MCF 10A (cell line): ENCODE measurements at regions of chr9 and their contacts with region 1.

Region 1: DNA sequence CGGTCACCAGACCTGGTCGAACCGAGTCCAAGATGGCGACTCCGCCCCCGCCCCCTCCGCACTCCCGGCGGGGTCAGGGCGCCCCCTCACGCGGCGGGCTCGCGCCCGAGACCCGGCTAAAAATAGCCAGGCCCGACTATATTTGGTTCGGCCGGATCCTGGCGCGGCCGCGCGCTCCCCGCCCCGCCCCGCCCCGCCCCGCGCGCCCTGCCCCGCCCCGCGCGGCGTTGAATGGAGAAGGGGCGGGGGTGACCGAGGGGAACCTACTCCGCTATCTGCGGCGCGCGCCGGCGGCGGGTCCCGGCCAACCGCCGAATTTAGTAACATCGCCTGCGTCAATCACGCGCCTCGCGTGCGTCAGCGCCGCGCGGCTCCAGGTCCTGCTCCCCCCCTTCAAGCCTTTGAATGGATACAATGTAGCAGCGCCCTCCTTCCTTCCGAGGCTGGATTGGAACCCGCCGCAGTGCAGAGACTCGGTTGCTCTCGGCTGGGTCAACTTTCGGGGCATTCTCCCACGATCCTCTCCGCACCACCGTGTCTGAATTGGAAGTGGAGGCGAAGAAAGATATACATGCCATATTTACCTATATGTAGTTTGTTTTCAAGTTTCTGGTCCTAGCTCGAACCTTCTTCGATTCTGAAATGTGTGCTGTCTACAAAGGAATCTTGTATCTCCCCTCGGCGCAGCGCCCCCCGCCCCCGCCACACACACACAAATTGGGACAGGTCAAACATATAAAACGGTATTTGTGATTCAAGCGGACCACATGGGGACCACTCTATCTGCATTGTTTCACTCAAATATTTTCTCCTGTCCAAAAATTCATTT is 1.6 kb upstream of the NR4A3 start:
- DNase-seq: peak; percentile 90
- H3K4me3 Mint-ChIP-seq: peak overlapping the region; percentile 93
- H3K27ac Mint-ChIP-seq: peak overlapping the region; percentile 89
- H3K4me1 Mint-ChIP-seq: peaks cover 25% of the 10 kb centered on the region
- H3K27me3 Mint-ChIP-seq: peaks cover 15% of the 10 kb centered on the region
- CTCF ChIP-seq: no peak

Region 2: GRCh38 chr9:99221621-99222415 is 598.3 kb before region 1 on chr9 and contains the starts of genes ALG2 and SEC61B:
- CTCF ChIA-PET with region 1: no interaction called
- POLR2A ChIA-PET with region 1: interaction called, 31 read pairs
- intact Hi-C with region 1: no loop called
- DNase-seq: peak; percentile 92
- H3K4me3 Mint-ChIP-seq: peak within 1 kb of the TSS; percentile 98
- H3K27ac Mint-ChIP-seq: peak within 1 kb of the TSS; percentile 100
- H3K4me1 Mint-ChIP-seq: peaks cover 50% of the 10 kb centered on the region
- H3K27me3 Mint-ChIP-seq: no peaks in the 10 kb centered on the region
- CTCF ChIP-seq: no peak
- total RNA-seq, gene ALG2: 54.6 and 54.7 TPM in 2 replicates
- total RNA-seq, gene SEC61B: 238 and 324 TPM in 2 replicates

Region 3: GRCh38 chr9:99807276-99807852 is 12.7 kb before region 1 on chr9:
- CTCF ChIA-PET with region 1: interaction called, 4 read pairs
- POLR2A ChIA-PET with region 1: interaction called, 15 read pairs
- intact Hi-C with region 1: no loop called
- DNase-seq: peak; percentile 83
- H3K4me3 Mint-ChIP-seq: no peak overlapping the region
- H3K27ac Mint-ChIP-seq: no peak overlapping the region
- H3K4me1 Mint-ChIP-seq: no peaks in the 10 kb centered on the region
- H3K27me3 Mint-ChIP-seq: no peaks in the 10 kb centered on the region
- CTCF ChIP-seq: peak; percentile 80

Region 4: DNA sequence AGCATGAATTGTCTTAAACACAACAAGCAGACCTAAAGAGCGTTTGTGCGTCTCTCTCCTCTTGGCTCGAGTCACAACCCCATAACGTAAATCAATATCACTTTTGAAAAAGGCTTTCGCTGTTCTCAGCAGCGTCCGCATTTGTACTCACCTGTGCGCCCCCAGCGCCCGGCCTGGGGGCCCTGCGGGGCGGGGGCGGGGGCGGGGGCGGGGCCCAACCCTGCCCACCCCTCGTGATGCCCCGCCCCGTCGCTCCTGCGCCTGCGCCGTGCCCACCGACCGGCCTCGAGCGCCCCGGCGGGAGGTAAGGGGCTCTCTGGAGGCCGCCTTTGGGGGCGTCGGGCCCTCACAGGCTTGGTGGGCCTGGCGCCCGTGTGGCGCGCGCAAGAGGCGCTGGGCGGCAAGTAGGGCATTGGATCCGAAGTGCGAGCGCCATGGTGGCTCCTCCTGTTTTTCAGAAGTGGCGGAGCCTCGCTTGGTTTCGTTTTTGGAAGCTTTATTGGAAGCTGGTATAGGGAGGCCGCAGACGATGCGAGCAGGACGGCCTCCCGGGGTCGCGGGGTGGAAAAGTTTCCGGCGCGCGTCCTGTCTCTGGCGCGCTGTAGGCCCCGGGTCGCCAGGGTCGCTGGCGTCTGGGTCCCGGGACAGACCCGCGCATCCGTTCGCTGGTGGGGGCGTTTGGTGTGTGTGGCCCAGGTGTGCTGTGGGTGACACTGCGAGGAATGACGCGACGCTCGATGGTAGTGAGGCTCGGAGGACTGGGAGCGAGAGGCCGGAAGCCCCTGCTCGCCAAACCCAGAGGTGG is 86.5 kb after region 1 on chr9 and contains the start of gene STX17:
- CTCF ChIA-PET with region 1: interaction called, 5 read pairs
- POLR2A ChIA-PET with region 1: interaction called, 71 read pairs
- intact Hi-C with region 1: loop called (anchors 1 kb)
- DNase-seq: peak; percentile 81
- H3K4me3 Mint-ChIP-seq: peak within 1 kb of the TSS; percentile 93
- H3K27ac Mint-ChIP-seq: peak within 1 kb of the TSS; percentile 96
- H3K4me1 Mint-ChIP-seq: peaks cover 32% of the 10 kb centered on the region
- H3K27me3 Mint-ChIP-seq: no peaks in the 10 kb centered on the region
- CTCF ChIP-seq: no peak
- total RNA-seq, gene STX17: 32.4 and 37.2 TPM in 2 replicates

Region 5: GRCh38 chr9:100011062-100011681 is 191.1 kb after region 1 on chr9:
- CTCF ChIA-PET with region 1: interaction called, 4 read pairs
- POLR2A ChIA-PET with region 1: no interaction called
- intact Hi-C with region 1: loop called (anchors 2 kb)
- DNase-seq: peak; percentile 60
- H3K4me3 Mint-ChIP-seq: no peak overlapping the region
- H3K27ac Mint-ChIP-seq: no peak overlapping the region
- H3K4me1 Mint-ChIP-seq: no peaks in the 10 kb centered on the region
- H3K27me3 Mint-ChIP-seq: no peaks in the 10 kb centered on the region
- CTCF ChIP-seq: peak; percentile 62

Region 6: GRCh38 chr9:100033877-100034551 is 213.9 kb after region 1 on chr9:
- CTCF ChIA-PET with region 1: no interaction called
- POLR2A ChIA-PET with region 1: no interaction called
- intact Hi-C with region 1: no loop called
- DNase-seq: no peak
- H3K4me3 Mint-ChIP-seq: no peak overlapping the region
- H3K27ac Mint-ChIP-seq: no peak overlapping the region
- H3K4me1 Mint-ChIP-seq: no peaks in the 10 kb centered on the region
- H3K27me3 Mint-ChIP-seq: no peaks in the 10 kb centered on the region
- CTCF ChIP-seq: no peak

Region 7: DNA sequence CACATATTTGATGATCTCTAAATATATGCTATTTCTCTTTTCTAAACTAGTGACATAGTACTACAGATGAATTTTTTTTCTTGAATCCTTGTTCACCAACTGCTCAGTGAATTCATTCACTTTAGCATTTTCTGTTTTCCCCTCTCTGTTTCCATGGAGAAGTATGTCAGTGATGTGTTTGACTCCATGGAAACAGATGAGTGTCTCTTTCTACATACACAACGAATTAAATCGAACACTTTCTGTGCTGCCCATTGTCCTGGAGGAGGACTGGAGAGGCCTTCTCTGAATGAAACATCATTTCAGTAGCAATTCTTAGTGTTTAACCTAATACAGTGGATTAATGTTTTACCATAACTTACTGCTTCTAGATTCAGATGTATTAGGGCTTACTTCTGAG is 288.5 kb after region 1 on chr9:
- CTCF ChIA-PET with region 1: no interaction called
- POLR2A ChIA-PET with region 1: no interaction called
- intact Hi-C with region 1: no loop called
- DNase-seq: no peak
- H3K4me3 Mint-ChIP-seq: no peak overlapping the region
- H3K27ac Mint-ChIP-seq: no peak overlapping the region
- H3K4me1 Mint-ChIP-seq: peaks cover 19% of the 10 kb centered on the region
- H3K27me3 Mint-ChIP-seq: no peaks in the 10 kb centered on the region
- CTCF ChIP-seq: no peak

Region 8: GRCh38 chr9:100352727-100353505 is 532.8 kb after region 1 on chr9 and contains the start of gene TEX10:
- CTCF ChIA-PET with region 1: no interaction called
- POLR2A ChIA-PET with region 1: interaction called, 12 read pairs
- intact Hi-C with region 1: no loop called
- DNase-seq: peak; percentile 82
- H3K4me3 Mint-ChIP-seq: peak within 1 kb of the TSS; percentile 94
- H3K27ac Mint-ChIP-seq: peak within 1 kb of the TSS; percentile 95
- H3K4me1 Mint-ChIP-seq: peaks cover 35% of the 10 kb centered on the region
- H3K27me3 Mint-ChIP-seq: no peaks in the 10 kb centered on the region
- CTCF ChIP-seq: no peak
- total RNA-seq, gene TEX10: 37.0 and 38.2 TPM in 2 replicates